ENCODE measurements at regions of chr17 and their contacts with region 1.

Region 1: GRCh38 chr17:35709874-35710273 is 21.6 kb upstream of the RASL10B start:
- DNase-seq: peak; percentile 3
- H3K4me3 ChIP-seq: no peak overlapping the region
- H3K27me3 ChIP-seq: no peaks in the 10 kb centered on the region
- CTCF ChIP-seq: no peak

Region 2: DNA sequence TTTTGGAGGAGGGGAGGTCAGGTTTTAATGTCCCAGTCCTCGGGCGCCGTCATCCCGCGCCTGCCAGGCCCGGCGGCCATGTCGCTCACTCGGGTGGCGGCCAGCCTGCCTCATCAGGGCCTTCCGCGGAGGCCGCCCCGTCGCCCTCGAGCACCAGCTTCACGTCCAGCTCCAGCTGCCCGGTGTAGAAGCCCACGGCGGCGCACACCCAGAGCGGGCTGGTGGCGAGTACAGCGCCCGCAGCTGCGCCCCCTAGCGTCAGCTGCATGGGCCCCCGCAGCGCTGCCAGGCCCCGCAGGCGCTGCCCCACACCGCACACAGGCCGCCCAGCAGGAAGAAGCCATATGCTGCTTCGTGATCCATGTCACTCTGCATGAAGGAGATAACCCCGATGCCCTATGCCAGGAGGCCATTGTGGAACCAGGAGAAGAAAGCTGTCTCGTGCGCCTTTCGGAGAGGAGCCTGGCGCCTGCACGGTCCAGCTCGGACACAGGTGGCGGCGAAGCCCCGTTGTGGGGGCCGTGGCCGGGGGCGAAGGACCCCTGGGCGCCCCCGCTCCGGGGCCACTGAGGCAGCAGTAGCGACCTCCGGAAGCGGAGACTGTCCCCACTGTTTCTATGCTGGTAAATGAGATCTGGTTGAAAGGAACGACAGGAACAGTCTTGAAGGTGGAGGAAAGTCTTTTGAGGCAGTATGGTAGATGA is 113.2 kb before region 1 on chr17:
- CTCF ChIA-PET with region 1: no interaction called
- POLR2A ChIA-PET with region 1: no interaction called
- DNase-seq: no peak
- H3K4me3 ChIP-seq: no peak overlapping the region
- H3K27me3 ChIP-seq: no peaks in the 10 kb centered on the region
- CTCF ChIP-seq: no peak

Region 3: DNA sequence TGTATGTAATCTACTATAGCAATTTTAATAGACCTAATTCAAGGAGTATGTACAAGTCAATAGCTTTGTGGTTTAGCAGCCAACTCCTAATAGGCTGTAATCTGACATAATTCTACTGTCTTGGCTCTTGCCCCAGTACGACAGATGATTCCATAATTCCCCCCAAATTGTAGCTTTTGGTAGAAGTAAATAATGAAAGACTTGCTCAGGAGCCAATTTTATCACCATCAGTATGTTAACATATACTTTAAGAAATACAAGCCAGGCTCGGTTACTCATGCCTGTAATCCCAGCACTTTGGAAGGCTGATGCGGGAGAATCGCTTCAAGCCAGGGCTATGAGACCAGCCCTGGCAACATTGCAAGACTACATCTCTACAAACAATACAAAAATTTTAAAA is 68.8 kb before region 1 on chr17:
- CTCF ChIA-PET with region 1: no interaction called
- POLR2A ChIA-PET with region 1: interaction called, 10 read pairs
- DNase-seq: no peak
- H3K4me3 ChIP-seq: no peak overlapping the region
- H3K27me3 ChIP-seq: no peaks in the 10 kb centered on the region
- CTCF ChIP-seq: no peak

Region 4: DNA sequence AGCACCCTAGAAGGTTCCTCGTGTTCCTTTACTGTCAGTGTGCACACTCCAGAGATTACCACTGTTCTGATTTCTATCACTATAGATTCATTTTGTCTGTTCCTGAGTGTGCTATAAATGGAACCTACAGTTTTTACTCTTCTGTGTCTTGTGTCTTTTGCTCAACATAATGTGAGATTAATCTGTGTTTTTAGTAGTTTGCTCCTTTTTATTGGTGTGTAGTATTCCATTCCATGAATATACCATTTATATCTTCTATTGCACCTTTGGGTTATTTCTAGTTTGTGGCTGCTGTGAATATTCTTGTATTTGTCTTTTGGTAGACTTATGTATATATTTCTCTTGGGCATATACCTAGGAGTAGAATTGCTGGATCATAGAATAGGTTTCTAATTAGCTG is 54.6 kb before region 1 on chr17:
- CTCF ChIA-PET with region 1: no interaction called
- POLR2A ChIA-PET with region 1: interaction called, 18 read pairs
- DNase-seq: no peak
- H3K4me3 ChIP-seq: no peak overlapping the region
- H3K27me3 ChIP-seq: no peaks in the 10 kb centered on the region
- CTCF ChIP-seq: no peak

Region 5: GRCh38 chr17:36148559-36149295 is 438.9 kb after region 1 on chr17:
- CTCF ChIA-PET with region 1: no interaction called
- POLR2A ChIA-PET with region 1: no interaction called
- DNase-seq: no peak
- H3K4me3 ChIP-seq: no peak overlapping the region
- H3K27me3 ChIP-seq: peaks cover 2% of the 10 kb centered on the region
- CTCF ChIP-seq: peak; percentile 99